Mammary epithelial cell (primary cell): ENCODE measurements at regions of chr3 and their contacts with region 1.

Region 1: GRCh38 chr3:146072824-146073223 is 88.2 kb downstream of the PLOD2 start:
- DNase-seq: no peak
- H3K4me3 ChIP-seq: no peak overlapping the region
- H3K27ac ChIP-seq: no peak overlapping the region
- H3K4me1 ChIP-seq: no peaks in the 10 kb centered on the region
- H3K27me3 ChIP-seq: no peaks in the 10 kb centered on the region
- CTCF ChIP-seq: no peak

Region 2: GRCh38 chr3:145959457-145960088 is 113.3 kb before region 1 on chr3:
- CTCF ChIA-PET with region 1: interaction called, 16 read pairs
- dilution Hi-C with region 1: no loop called
- in situ Hi-C with region 1: no loop called
- intact Hi-C with region 1: no loop called
- DNase-seq: no peak
- H3K4me3 ChIP-seq: no peak overlapping the region
- H3K27ac ChIP-seq: no peak overlapping the region
- H3K4me1 ChIP-seq: no peaks in the 10 kb centered on the region
- H3K27me3 ChIP-seq: no peaks in the 10 kb centered on the region
- CTCF ChIP-seq: no peak

Region 3: DNA sequence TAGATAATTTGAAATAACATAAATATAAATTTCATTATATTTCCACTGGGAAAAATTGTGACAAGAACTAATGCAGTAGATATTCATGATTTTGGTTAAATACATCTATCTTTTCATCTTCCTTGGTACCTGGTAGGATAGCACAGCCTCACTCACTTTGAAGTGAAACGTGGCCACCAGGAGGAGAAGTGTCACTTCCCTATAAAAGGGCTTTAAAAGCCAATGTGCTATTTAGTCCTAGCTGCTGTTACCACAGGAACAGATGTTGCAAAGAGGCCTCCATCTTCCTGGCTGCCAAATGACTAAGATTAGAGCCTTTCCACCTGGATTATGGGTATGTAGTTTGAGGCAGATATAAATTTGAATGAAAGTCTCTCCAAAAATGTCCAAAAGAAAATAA is 51.8 kb before region 1 on chr3:
- CTCF ChIA-PET with region 1: no interaction called
- dilution Hi-C with region 1: no loop called
- in situ Hi-C with region 1: no loop called
- intact Hi-C with region 1: no loop called
- DNase-seq: no peak
- H3K4me3 ChIP-seq: no peak overlapping the region
- H3K27ac ChIP-seq: no peak overlapping the region
- H3K4me1 ChIP-seq: no peaks in the 10 kb centered on the region
- H3K27me3 ChIP-seq: no peaks in the 10 kb centered on the region
- CTCF ChIP-seq: no peak

Region 4: GRCh38 chr3:146093932-146094583 is 21.2 kb after region 1 on chr3:
- CTCF ChIA-PET with region 1: no interaction called
- dilution Hi-C with region 1: no loop called
- in situ Hi-C with region 1: no loop called
- intact Hi-C with region 1: no loop called
- DNase-seq: no peak
- H3K4me3 ChIP-seq: no peak overlapping the region
- H3K27ac ChIP-seq: no peak overlapping the region
- H3K4me1 ChIP-seq: peaks cover 4% of the 10 kb centered on the region
- H3K27me3 ChIP-seq: no peaks in the 10 kb centered on the region
- CTCF ChIP-seq: no peak

Region 5: GRCh38 chr3:146117406-146118285 is 44.8 kb after region 1 on chr3:
- CTCF ChIA-PET with region 1: no interaction called
- dilution Hi-C with region 1: no loop called
- in situ Hi-C with region 1: no loop called
- intact Hi-C with region 1: no loop called
- DNase-seq: peak; percentile 25
- H3K4me3 ChIP-seq: no peak overlapping the region
- H3K27ac ChIP-seq: no peak overlapping the region
- H3K4me1 ChIP-seq: no peaks in the 10 kb centered on the region
- H3K27me3 ChIP-seq: no peaks in the 10 kb centered on the region
- CTCF ChIP-seq: no peak

Region 6: GRCh38 chr3:146134348-146135117 is 61.7 kb after region 1 on chr3:
- CTCF ChIA-PET with region 1: interaction called, 21 read pairs
- dilution Hi-C with region 1: no loop called
- in situ Hi-C with region 1: no loop called
- intact Hi-C with region 1: no loop called
- DNase-seq: no peak
- H3K4me3 ChIP-seq: no peak overlapping the region
- H3K27ac ChIP-seq: no peak overlapping the region
- H3K4me1 ChIP-seq: peaks cover 6% of the 10 kb centered on the region
- H3K27me3 ChIP-seq: no peaks in the 10 kb centered on the region
- CTCF ChIP-seq: no peak